Activated CD8-positive, alpha-beta T cell treated with anti-CD3 and anti-CD28 coated beads for 36 hours (primary cell): ENCODE measurements at regions of chr6 and their contacts with region 1.

Region 1: GRCh38 chr6:13873285-13874190 is 51.2 kb upstream of the RNF182 start:
- DNase-seq: peak; percentile 86
- ATAC-seq: peak; percentile 95
- H3K4me3 Mint-ChIP-seq: peak overlapping the region; percentile 60
- H3K27ac Mint-ChIP-seq: no peak overlapping the region
- H3K4me1 Mint-ChIP-seq: peaks cover 12% of the 10 kb centered on the region
- H3K27me3 Mint-ChIP-seq: peaks cover 7% of the 10 kb centered on the region
- CTCF ChIP-seq: peak; percentile 86

Region 2: DNA sequence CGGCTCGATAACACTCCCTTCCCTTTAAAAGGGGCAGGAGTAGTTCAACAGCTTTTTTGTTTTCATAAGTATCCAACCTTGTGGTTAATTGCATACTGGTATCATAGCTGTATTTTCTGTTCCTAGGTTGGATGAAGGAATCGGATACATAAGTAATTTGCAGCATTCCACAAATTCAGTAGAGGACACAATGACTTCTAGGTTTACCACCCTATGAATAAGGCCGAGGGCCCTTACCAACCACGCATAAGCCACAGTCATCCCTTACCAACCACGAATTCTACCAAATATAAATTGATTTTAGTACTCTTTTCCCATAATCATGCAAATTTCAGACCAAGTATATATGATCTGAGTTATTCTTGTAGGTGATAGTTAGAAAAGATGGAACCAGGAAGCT is 95.5 kb before region 1 on chr6:
- CTCF ChIA-PET with region 1: no interaction called
- POLR2A ChIA-PET with region 1: no interaction called
- intact Hi-C with region 1: no loop called
- DNase-seq: no peak
- ATAC-seq: no peak
- H3K4me3 Mint-ChIP-seq: no peak overlapping the region
- H3K27ac Mint-ChIP-seq: no peak overlapping the region
- H3K4me1 Mint-ChIP-seq: no peaks in the 10 kb centered on the region
- H3K27me3 Mint-ChIP-seq: no peaks in the 10 kb centered on the region
- CTCF ChIP-seq: no peak

Region 3: GRCh38 chr6:13795041-13795750 is 78.3 kb before region 1 on chr6:
- CTCF ChIA-PET with region 1: interaction called, 11 read pairs
- POLR2A ChIA-PET with region 1: interaction called, 5 read pairs
- intact Hi-C with region 1: no loop called
- DNase-seq: peak; percentile 95
- ATAC-seq: peak; percentile 97
- H3K4me3 Mint-ChIP-seq: no peak overlapping the region
- H3K27ac Mint-ChIP-seq: peak overlapping the region; percentile 38
- H3K4me1 Mint-ChIP-seq: peaks cover 17% of the 10 kb centered on the region
- H3K27me3 Mint-ChIP-seq: no peaks in the 10 kb centered on the region
- CTCF ChIP-seq: peak; percentile 89

Region 4: DNA sequence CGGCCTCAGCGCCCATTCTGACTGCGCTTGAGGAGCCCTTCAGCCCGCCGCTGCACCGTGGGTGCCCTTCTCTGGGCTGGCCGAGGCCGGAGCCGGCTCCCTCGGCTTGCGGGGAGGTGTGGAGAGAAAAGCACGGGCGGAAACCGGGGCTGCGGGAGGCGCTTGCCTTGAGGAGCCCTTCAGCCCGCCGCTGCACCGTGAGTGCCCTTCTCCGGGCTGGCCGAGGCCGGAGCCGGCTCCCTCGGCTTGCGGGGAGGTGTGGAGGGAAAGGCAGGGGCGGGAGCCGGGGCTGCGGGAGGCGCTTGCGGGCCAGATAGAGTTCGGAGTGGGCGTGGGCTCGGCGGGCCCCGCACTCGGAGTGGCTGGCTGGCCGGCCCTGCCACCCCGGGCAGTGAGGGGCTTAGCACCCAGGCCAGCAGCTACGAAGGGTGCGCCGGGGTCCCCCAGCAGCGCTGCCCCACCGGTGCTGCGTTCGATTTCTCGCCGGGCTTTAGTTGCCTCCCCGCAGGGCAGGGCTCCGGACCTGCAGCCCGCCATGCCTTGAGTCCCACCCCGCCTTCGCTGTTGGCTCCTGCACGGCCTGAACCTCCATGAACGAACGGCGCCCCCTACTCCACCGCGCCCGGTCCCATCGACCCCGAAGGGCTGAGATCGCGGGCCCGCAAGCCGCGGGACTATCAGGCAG is 13.5 kb before region 1 on chr6:
- CTCF ChIA-PET with region 1: interaction called, 13 read pairs
- POLR2A ChIA-PET with region 1: no interaction called
- intact Hi-C with region 1: no loop called
- DNase-seq: no peak
- ATAC-seq: no peak
- H3K4me3 Mint-ChIP-seq: no peak overlapping the region
- H3K27ac Mint-ChIP-seq: no peak overlapping the region
- H3K4me1 Mint-ChIP-seq: no peaks in the 10 kb centered on the region
- H3K27me3 Mint-ChIP-seq: peaks cover 30% of the 10 kb centered on the region
- CTCF ChIP-seq: no peak

Region 5: GRCh38 chr6:13883966-13884365 is 10.4 kb after region 1 on chr6:
- CTCF ChIA-PET with region 1: interaction called, 25 read pairs
- POLR2A ChIA-PET with region 1: no interaction called
- intact Hi-C with region 1: no loop called
- DNase-seq: no peak
- ATAC-seq: no peak
- H3K4me3 Mint-ChIP-seq: no peak overlapping the region
- H3K27ac Mint-ChIP-seq: no peak overlapping the region
- H3K4me1 Mint-ChIP-seq: no peaks in the 10 kb centered on the region
- H3K27me3 Mint-ChIP-seq: peaks cover 2% of the 10 kb centered on the region
- CTCF ChIP-seq: no peak

Region 6: GRCh38 chr6:13892007-13892645 is 18.6 kb after region 1 on chr6:
- CTCF ChIA-PET with region 1: interaction called, 25 read pairs
- POLR2A ChIA-PET with region 1: no interaction called
- intact Hi-C with region 1: no loop called
- DNase-seq: no peak
- ATAC-seq: no peak
- H3K4me3 Mint-ChIP-seq: no peak overlapping the region
- H3K27ac Mint-ChIP-seq: no peak overlapping the region
- H3K4me1 Mint-ChIP-seq: no peaks in the 10 kb centered on the region
- H3K27me3 Mint-ChIP-seq: peaks cover 7% of the 10 kb centered on the region
- CTCF ChIP-seq: no peak

Region 7: DNA sequence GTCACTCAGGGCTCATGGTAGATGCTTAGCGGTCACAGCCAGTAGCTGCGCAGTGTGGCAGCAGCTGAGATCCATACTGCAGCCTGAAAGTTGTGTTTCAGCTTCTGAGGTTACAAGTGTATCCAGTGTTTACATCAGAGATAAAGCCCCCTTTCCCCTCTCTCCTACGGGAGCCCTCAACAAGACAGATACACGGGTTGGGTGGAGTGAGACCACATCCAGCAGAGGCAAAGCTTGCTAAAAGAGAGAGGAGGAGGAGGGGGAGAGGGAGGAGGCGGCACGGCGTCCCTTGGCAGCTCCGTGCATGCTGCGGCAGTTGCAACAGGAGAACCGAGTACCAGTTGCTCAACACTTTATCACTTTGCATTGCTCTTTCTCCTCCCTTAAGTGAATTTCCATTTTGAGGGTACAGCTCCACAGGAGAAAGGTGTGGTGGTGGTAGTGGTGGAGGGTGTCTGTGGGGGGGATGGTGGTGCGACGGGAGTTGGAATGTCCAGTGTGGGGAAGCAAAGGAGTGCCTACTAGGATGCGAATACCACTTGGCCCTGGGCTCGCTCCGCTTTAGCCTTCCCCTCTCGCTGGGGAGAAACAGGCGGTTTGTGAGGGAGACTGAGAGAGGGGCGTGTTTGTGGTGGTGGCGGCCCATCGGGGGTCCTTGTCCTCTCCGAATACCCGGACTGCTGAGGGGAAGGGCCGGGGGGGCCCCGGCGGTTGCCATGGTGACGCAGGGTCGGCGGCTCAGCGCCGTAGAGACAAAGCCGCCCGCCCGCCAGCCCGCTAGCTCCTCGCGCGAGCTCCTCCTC is 50.8 kb after region 1 on chr6:
- CTCF ChIA-PET with region 1: interaction called, 12 read pairs
- POLR2A ChIA-PET with region 1: no interaction called
- intact Hi-C with region 1: no loop called
- DNase-seq: peak; percentile 57
- ATAC-seq: peak; percentile 29
- H3K4me3 Mint-ChIP-seq: peak overlapping the region; percentile 66
- H3K27ac Mint-ChIP-seq: no peak overlapping the region
- H3K4me1 Mint-ChIP-seq: peaks cover 14% of the 10 kb centered on the region
- H3K27me3 Mint-ChIP-seq: peaks cover 53% of the 10 kb centered on the region
- CTCF ChIP-seq: no peak